Activated T-helper 1 cell treated with anti-CD3 and anti-CD28 coated beads, Interleukin-12 subunit alpha, Interleukin-12 subunit beta, Interleukin-2, Interleukin-4 antibody, amounts not matched to agents 30 ng/mL and 10 ng/mL and 1 ng/mL, durations not matched to agents 14 hours and 24 hours and 36 hours (primary cell): ENCODE measurements at regions of chr17 and their contacts with region 1.

Region 1: DNA sequence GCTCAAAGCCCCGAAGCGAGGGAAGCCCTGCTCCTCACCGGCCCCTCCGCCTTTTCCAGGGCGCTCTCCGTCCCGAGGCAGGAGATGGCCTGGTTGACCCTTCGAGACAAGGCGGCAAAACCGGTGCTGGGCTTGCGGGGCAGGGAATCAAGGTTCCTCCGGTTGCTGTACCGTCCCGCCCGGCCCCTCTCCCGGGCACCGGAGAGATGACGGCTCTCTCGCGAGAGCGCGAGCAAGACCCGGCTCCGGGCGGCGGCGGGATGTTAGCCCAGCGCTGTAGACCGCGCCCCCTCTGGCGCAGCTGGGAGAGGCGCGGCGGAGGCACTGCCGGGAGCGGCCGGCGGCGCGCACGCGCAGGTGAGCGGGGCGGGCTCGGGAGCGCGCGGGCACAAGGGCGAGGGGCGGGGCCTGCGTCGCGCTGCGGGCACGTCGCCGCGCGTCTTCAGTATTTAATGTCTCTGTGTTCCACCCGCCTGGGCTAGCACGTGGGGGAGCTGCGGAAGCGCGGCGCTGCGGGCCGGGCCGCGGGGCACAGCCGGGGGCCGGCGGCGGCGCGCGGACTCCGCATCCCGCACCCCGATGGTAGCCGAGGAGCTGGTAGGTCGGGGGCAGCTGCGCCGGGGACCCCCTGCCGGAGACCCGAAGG is at the start of gene AKAP1:
- DNase-seq: peak; percentile 96
- H3K4me3 Mint-ChIP-seq: peak within 1 kb of the TSS; percentile 92
- H3K27ac Mint-ChIP-seq: peak within 1 kb of the TSS; percentile 87
- H3K4me1 Mint-ChIP-seq: peaks cover 28% of the 10 kb centered on the region
- H3K27me3 Mint-ChIP-seq: peaks cover 9% of the 10 kb centered on the region
- total RNA-seq, gene AKAP1: 53.8 and 59.9 TPM in 2 replicates

Region 2: DNA sequence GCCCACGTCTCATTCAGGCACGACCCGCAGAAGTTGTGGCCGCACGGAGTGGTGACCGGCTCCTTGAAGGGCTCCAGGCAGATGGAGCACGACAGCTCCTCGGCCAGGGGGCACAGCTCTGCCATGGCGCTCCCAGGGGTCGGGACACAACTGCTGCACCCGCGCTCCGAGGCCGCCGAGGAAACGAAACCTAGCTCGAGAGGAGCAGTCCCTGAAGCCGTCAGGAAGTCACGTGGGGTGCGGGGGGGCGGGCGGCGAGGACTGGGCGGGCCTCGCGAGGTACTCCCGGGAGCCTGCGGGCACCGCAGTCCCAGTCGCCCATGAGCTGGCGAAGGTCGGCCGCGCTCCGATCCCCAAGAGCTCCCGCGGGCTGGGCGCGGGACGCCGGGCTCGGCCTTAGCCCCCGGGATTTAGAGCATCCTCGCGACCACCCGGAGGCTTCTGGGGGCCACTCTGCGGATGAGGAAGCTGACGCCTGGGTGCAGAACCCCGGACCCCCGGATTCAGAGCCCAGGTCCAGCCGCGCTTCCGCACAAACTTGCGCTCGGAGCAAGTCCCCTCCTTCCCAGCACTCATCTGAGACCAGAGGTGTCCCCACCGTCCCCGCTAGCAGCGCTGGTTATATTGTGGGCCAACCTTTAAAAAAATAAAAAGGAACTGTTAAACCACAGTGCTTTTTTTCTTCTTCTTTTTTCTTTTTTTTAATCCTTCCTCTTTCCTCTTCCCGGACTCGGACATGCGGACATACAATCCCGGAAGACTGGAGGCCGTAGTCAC is 170.9 kb before region 1 on chr17 and contains the start of gene TRIM25:
- intact Hi-C with region 1: loop called (anchors 1 kb)
- DNase-seq: peak; percentile 76
- H3K4me3 Mint-ChIP-seq: peak within 1 kb of the TSS; percentile 93
- H3K27ac Mint-ChIP-seq: peak within 1 kb of the TSS; percentile 95
- H3K4me1 Mint-ChIP-seq: peaks cover 65% of the 10 kb centered on the region
- H3K27me3 Mint-ChIP-seq: peaks cover 2% of the 10 kb centered on the region
- total RNA-seq, gene TRIM25: 86.9 and 98.2 TPM in 2 replicates

Region 3: GRCh38 chr17:56926701-56927590 is 158.0 kb before region 1 on chr17:
- intact Hi-C with region 1: no loop called
- DNase-seq: no peak
- H3K4me3 Mint-ChIP-seq: no peak overlapping the region
- H3K27ac Mint-ChIP-seq: no peak overlapping the region
- H3K4me1 Mint-ChIP-seq: no peaks in the 10 kb centered on the region
- H3K27me3 Mint-ChIP-seq: peaks cover 2% of the 10 kb centered on the region

Region 4: GRCh38 chr17:56977673-56978395 is 107.1 kb before region 1 on chr17 and contains the start of gene SCPEP1:
- intact Hi-C with region 1: loop called (anchors 1 kb)
- DNase-seq: peak; percentile 67
- H3K4me3 Mint-ChIP-seq: peak within 1 kb of the TSS; percentile 89
- H3K27ac Mint-ChIP-seq: peak within 1 kb of the TSS; percentile 79
- H3K4me1 Mint-ChIP-seq: peaks cover 19% of the 10 kb centered on the region
- H3K27me3 Mint-ChIP-seq: peaks cover 29% of the 10 kb centered on the region
- total RNA-seq, gene SCPEP1: 11.6 and 13.9 TPM in 2 replicates

Region 5: DNA sequence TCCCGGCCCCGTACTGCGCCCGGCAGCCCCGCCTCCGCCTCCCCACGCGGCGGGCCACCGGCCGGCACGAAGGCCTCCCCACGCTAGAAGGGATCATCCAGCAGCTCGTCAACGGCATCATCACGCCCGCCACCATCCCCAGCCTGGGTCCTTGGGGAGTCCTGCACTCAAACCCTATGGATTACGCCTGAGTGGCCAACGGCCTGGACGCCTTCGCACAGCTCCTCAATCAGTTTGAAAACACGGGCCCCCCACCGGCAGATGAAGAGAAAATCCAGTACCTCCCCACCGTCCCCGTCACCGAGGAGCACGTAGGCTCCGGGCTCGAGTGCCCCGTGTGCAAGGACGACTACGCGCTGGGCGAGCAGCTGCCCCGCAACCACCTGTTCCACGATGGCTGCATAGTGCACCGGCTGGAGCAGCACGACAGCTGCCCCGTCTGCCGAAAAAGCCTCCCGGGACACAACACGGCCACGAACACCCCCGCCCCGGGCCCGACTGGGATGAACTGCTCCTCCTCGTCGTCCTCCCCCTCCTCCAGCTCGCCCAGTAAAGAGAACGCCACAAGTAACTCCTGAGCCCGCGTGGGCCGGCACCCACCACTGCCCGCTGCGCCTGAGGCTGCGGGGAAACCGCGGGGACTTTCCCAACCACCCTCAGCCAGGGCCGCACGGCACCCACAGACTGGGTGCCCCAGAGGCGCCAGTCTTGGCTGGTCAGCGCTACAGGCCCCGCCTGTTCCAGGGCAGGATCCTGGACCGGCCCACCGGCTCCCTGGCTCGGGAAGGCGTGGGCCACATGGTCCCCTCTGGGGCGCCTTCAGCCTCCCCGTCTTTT is 38.8 kb before region 1 on chr17:
- intact Hi-C with region 1: loop called (anchors 5 kb)
- DNase-seq: peak; percentile 28
- H3K4me3 Mint-ChIP-seq: peak overlapping the region; percentile 75
- H3K27ac Mint-ChIP-seq: peak overlapping the region; percentile 76
- H3K4me1 Mint-ChIP-seq: peaks cover 25% of the 10 kb centered on the region
- H3K27me3 Mint-ChIP-seq: peaks cover 60% of the 10 kb centered on the region

Region 6: DNA sequence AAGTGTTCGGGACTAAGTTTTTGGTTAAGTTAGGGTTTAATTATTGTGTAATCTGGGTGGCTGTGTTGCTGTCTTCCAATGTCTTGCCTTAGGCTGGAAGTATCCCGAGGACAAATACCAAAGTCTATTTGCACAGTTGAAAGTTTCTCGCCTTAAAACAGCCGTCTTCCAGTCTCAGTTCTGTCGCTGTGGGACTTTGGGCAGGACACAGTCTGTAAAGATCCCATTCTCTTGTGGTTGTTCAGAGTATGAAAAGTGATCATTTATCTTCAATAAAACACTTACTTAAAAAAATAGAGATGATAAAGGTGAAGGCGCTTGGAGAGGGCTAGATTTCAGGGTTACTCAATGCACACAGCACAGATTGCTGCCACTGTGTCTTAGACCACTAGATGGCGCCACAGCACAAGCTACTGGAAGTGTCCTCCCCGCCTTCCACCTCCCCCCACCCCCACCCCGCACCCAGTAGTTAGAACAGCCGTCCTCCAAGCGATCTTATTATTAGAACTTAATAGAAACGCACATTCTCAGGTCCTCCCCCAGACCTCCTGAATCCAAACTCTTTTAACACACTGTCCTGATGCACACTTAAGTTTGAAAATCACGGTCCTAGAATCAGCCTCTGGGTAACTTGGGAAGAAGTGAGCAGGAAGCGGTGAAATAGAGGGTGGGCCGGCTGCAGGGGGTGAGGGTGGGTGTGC is 46.0 kb after region 1 on chr17:
- intact Hi-C with region 1: no loop called
- DNase-seq: peak; percentile 61
- H3K4me3 Mint-ChIP-seq: no peak overlapping the region
- H3K27ac Mint-ChIP-seq: peak overlapping the region; percentile 52
- H3K4me1 Mint-ChIP-seq: peaks cover 11% of the 10 kb centered on the region
- H3K27me3 Mint-ChIP-seq: no peaks in the 10 kb centered on the region